MCF 10A (cell line): ENCODE measurements at regions of chr4 and their contacts with region 1.

Region 1: DNA sequence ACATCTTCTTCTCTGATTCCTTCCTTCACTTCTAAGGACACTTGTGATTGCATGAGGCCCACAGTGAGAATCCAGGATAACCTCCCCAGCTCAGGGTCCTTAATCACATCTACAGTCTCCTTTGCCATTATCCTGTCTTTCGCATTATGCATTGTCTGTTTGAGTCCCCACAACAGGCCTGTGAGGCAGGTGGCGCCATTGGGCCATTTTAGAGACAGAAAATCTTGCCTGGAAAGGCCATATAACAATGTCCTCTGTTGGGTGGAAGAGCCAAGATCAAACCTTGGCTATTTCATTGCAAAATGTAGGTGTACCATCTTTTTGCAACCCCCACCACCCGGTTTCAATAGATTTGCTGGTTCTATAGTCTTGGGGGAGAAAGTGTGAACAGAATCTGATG is 11.8 kb upstream of the DCUN1D4 start:
- DNase-seq: peak; percentile 69
- H3K4me3 Mint-ChIP-seq: no peak overlapping the region
- H3K27ac Mint-ChIP-seq: no peak overlapping the region
- H3K4me1 Mint-ChIP-seq: no peaks in the 10 kb centered on the region
- H3K27me3 Mint-ChIP-seq: no peaks in the 10 kb centered on the region
- CTCF ChIP-seq: peak; percentile 53

Region 2: GRCh38 chr4:51842554-51843308 is 11.6 kb after region 1 on chr4 and contains the start of gene DCUN1D4:
- CTCF ChIA-PET with region 1: interaction called, 29 read pairs
- POLR2A ChIA-PET with region 1: interaction called, 4 read pairs
- intact Hi-C with region 1: no loop called
- DNase-seq: peak; percentile 100
- H3K4me3 Mint-ChIP-seq: peak within 1 kb of the TSS; percentile 95
- H3K27ac Mint-ChIP-seq: peak within 1 kb of the TSS; percentile 88
- H3K4me1 Mint-ChIP-seq: peaks cover 24% of the 10 kb centered on the region
- H3K27me3 Mint-ChIP-seq: no peaks in the 10 kb centered on the region
- CTCF ChIP-seq: no peak
- total RNA-seq, gene DCUN1D4: 66.4 and 88.0 TPM in 2 replicates